Ascending aorta (tissue), 2 donors: ENCODE measurements at regions of chr17 and their contacts with region 1.

Region 1: GRCh38 chr17:76714822-76715495 is 4.2 kb upstream of the MXRA7 start:
- DNase-seq: peak in 1 of 2 donors; percentile 83
- H3K4me3 ChIP-seq: no peak overlapping the region
- H3K27ac ChIP-seq: peak overlapping the region; percentile 69 to 72
- H3K4me1 ChIP-seq: peaks cover 0 to 26% of the 10 kb centered on the region in 2 donors
- H3K27me3 ChIP-seq: no peaks in the 10 kb centered on the region
- CTCF ChIP-seq: peak; percentile 78 to 91 (median 79)

Region 2: GRCh38 chr17:76296186-76296585 is 418.8 kb before region 1 on chr17:
- intact Hi-C with region 1: no loop called
- DNase-seq: no peak
- H3K4me3 ChIP-seq: no peak overlapping the region
- H3K27ac ChIP-seq: no peak overlapping the region
- H3K4me1 ChIP-seq: no peaks in the 10 kb centered on the region
- H3K27me3 ChIP-seq: no peaks in the 10 kb centered on the region
- CTCF ChIP-seq: no peak

Region 3: GRCh38 chr17:76523084-76524037 is 191.6 kb before region 1 on chr17:
- intact Hi-C with region 1: loop called (anchors 10 kb)
- DNase-seq: peak in 1 of 2 donors; percentile 84
- H3K4me3 ChIP-seq: no peak overlapping the region
- H3K27ac ChIP-seq: no peak overlapping the region
- H3K4me1 ChIP-seq: peaks cover 3 to 7% of the 10 kb centered on the region in 2 donors
- H3K27me3 ChIP-seq: no peaks in the 10 kb centered on the region
- CTCF ChIP-seq: peak; percentile 99 to 100 (median 100)

Region 4: GRCh38 chr17:76557368-76558197 is 157.4 kb before region 1 on chr17:
- intact Hi-C with region 1: loop called (anchors 10 kb)
- DNase-seq: peak; percentile 73 to 98
- H3K4me3 ChIP-seq: peak overlapping the region; percentile 50 to 84
- H3K27ac ChIP-seq: peak overlapping the region; percentile 82
- H3K4me1 ChIP-seq: peaks cover 4 to 21% of the 10 kb centered on the region in 2 donors
- H3K27me3 ChIP-seq: no peaks in the 10 kb centered on the region
- CTCF ChIP-seq: peak; percentile 67 to 76 (median 68)

Region 5: GRCh38 chr17:76623271-76624146 is 91.5 kb before region 1 on chr17:
- intact Hi-C with region 1: loop called (anchors 2 kb)
- DNase-seq: peak in 1 of 2 donors; percentile 81
- H3K4me3 ChIP-seq: no peak overlapping the region
- H3K27ac ChIP-seq: no peak overlapping the region
- H3K4me1 ChIP-seq: no peaks in the 10 kb centered on the region
- H3K27me3 ChIP-seq: no peaks in the 10 kb centered on the region
- CTCF ChIP-seq: peak; percentile 76 to 97 (median 92)

Region 6: DNA sequence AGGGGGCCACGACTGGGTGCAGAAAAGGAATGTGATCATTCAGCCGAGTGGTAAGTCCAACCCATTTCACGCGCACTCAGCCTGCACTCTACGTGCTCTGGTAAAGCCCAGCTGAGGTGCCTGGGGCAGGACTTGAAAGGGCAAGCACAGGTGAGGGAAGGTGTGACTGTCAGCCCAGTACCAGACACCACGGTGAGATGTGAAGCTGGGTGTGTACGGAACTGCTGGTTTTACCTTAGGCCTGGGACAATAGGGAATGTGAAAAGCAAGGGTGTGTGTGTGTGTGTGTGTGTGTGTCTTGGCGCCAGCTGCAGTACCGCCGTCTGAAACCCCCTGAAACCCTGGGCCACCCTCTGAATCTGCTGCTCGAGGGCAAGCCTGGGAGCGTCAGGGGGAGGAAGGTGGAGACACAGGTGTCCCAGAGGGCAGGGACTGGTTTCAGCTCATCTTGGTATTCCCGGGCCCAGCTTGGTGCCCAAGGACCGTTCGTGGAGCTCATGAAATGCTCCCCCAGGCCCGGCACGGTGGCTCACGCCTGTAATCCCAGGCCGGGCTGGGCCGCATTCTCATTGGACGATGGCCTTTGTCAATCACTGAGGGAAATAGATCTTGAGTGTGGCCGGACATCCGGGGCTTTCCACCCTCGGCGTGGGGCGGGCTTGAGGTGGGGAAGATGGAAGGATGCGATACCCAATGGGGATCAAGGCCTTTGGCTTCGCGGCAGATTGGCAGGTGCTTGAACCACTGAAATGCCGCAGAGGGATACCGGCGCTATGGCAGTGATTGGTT is 43.6 kb before region 1 on chr17:
- intact Hi-C with region 1: loop called (anchors 5 kb)
- DNase-seq: peak; percentile 99 to 100
- H3K4me3 ChIP-seq: peak overlapping the region; percentile 66 to 67
- H3K27ac ChIP-seq: peak overlapping the region; percentile 77 to 79
- H3K4me1 ChIP-seq: peaks cover 0 to 8% of the 10 kb centered on the region in 2 donors
- H3K27me3 ChIP-seq: peaks cover 3% of the 10 kb centered on the region
- CTCF ChIP-seq: no peak

Region 7: DNA sequence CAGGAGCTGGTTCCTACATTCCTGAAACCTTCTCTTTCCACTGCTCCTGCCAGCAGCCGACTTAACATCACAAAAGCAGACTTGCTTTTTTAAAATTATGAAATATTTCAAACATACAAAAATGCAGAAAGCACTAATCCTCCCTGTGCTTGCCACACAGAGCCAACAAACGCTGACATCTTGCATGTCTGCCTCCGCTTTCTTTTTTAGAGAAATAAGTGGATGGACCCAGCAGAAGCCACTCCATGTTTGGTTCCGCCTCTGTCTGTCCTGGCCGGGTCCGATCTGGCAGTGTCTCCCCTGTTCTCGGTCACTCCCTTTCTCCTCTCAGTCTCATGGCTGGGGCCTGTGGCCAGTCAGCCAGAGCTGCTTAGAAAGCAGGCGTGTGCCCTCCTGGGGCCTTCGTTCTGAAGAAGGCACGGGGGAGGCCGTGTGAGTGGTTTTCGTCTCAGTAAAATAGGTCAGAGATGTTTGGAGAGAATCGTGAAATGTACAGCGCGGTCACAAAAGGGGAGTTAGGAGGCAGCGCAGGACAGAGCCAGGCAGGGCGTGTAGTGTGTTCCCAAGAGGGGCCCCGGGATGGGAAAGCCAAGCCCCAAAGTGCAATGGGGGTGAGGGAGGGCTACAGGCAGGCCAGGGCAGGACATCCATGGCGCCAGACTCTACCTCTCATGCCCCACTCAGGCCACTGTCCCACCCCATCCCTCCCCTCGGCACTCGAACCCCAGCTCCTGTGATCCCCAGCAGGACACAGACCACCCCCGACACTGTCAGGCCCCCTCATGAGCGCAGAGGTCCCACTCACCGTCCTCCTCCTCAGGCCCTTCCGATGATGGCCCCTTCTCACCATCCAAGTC is 27.4 kb before region 1 on chr17:
- intact Hi-C with region 1: loop called (anchors 1 kb)
- DNase-seq: peak in 1 of 2 donors; percentile 83
- H3K4me3 ChIP-seq: peak overlapping the region in 1 of 2 donors; percentile 21
- H3K27ac ChIP-seq: peak overlapping the region; percentile 89 to 91
- H3K4me1 ChIP-seq: peaks cover 9 to 40% of the 10 kb centered on the region in 2 donors
- H3K27me3 ChIP-seq: no peaks in the 10 kb centered on the region
- CTCF ChIP-seq: no peak

Region 8: GRCh38 chr17:76726231-76726775 is 11.3 kb after region 1 on chr17 and contains the start of gene JMJD6:
- intact Hi-C with region 1: loop called (anchors 1 kb)
- DNase-seq: peak; percentile 91 to 98
- H3K4me3 ChIP-seq: peak within 1 kb of the TSS; percentile 93 to 100
- H3K27ac ChIP-seq: peak within 1 kb of the TSS; percentile 96 to 98
- H3K4me1 ChIP-seq: peaks cover 24 to 33% of the 10 kb centered on the region in 2 donors
- H3K27me3 ChIP-seq: no peaks in the 10 kb centered on the region
- CTCF ChIP-seq: no peak
- total RNA-seq, gene JMJD6: 29.4 TPM